ENCODE measurements at regions of chr11 and their contacts with region 1.

Region 1: GRCh38 chr11:108222686-108223448 is at the start of gene ATM:
- DNase-seq: peak; percentile 97 to 100 (median 98)
- ATAC-seq: peak; percentile 73
- H3K4me3 ChIP-seq: peak within 1 kb of the TSS; percentile 75
- H3K4me3 Mint-ChIP-seq: no peak within 1 kb of the TSS
- H3K27ac ChIP-seq: peak within 1 kb of the TSS; percentile 95 to 99
- H3K27ac Mint-ChIP-seq: no peak within 1 kb of the TSS
- H3K4me1 ChIP-seq: peaks cover 23% of the 10 kb centered on the region
- H3K4me1 Mint-ChIP-seq: peaks cover 50% of the 10 kb centered on the region
- H3K27me3 ChIP-seq: no peaks in the 10 kb centered on the region
- H3K27me3 Mint-ChIP-seq: no peaks in the 10 kb centered on the region
- CTCF ChIP-seq: peak; percentile 82
- total RNA-seq, gene ATM: 307 to 329 TPM

Region 2: DNA sequence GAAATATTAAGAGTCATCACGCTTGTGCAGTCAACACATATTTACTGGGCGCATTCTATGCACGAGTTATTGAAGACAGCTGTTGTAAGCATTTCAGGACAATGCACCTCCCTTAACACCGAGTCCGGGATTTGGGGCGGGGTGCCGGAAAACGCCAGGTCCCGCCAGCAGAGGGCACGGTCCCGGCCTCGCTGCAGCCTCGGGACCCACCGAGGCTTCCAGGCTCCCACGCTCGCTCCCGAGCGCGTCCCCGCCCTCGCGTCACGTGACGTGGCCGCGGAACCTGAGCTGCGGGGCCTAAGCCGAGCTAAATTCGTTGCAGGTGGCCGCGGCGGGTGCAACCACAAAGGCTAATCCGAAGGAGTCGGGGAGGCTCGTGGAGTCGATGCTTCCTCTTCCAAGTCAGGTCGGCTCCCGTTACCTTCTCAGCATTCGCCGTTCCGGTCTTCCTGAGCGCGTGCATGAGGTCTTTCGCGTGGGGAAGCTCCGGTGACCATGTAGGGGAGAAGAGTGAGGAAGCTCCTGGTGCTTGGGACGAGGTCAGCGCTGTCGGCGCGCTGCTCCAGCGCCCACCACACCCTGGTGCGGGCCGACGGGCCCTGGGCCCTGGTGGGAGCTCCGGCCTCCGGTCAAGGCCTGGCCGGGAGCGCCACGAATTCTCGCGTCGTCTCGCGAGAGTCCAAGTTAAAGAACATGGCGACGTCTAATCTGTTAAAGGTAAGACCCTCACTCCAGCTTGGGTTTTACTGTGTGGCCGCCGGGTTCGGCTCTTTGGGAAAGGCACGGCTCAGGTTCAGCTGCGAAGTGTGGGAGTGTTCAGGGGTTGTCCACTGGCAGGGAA is 214.0 kb before region 1 on chr11 and contains the start of gene CUL5:
- CTCF ChIA-PET with region 1: interaction called, 3 read pairs
- POLR2A ChIA-PET with region 1: interaction called, 11 read pairs
- intact Hi-C with region 1: no loop called
- DNase-seq: peak; percentile 76 to 95 (median 86)
- ATAC-seq: peak; percentile 86
- H3K4me3 ChIP-seq: peak within 1 kb of the TSS; percentile 89
- H3K4me3 Mint-ChIP-seq: peak within 1 kb of the TSS; percentile 99
- H3K27ac ChIP-seq: peak within 1 kb of the TSS; percentile 91 to 94
- H3K27ac Mint-ChIP-seq: peak within 1 kb of the TSS; percentile 93
- H3K4me1 ChIP-seq: peaks cover 15% of the 10 kb centered on the region
- H3K4me1 Mint-ChIP-seq: peaks cover 16% of the 10 kb centered on the region
- H3K27me3 ChIP-seq: no peaks in the 10 kb centered on the region
- H3K27me3 Mint-ChIP-seq: no peaks in the 10 kb centered on the region
- CTCF ChIP-seq: peak; percentile 86
- total RNA-seq, gene CUL5: 65.5 to 67.6 TPM

Region 3: GRCh38 chr11:108135845-108136544 is 86.9 kb before region 1 on chr11:
- CTCF ChIA-PET with region 1: no interaction called
- POLR2A ChIA-PET with region 1: no interaction called
- intact Hi-C with region 1: no loop called
- DNase-seq: peak in 5 of 14 experiments; percentile 7 to 53 (median 35)
- ATAC-seq: peak; percentile 66
- H3K4me3 ChIP-seq: no peak overlapping the region
- H3K4me3 Mint-ChIP-seq: no peak overlapping the region
- H3K27ac ChIP-seq: no peak overlapping the region
- H3K27ac Mint-ChIP-seq: peak overlapping the region; percentile 40
- H3K4me1 ChIP-seq: no peaks in the 10 kb centered on the region
- H3K4me1 Mint-ChIP-seq: peaks cover 21% of the 10 kb centered on the region
- H3K27me3 ChIP-seq: no peaks in the 10 kb centered on the region
- H3K27me3 Mint-ChIP-seq: no peaks in the 10 kb centered on the region
- CTCF ChIP-seq: peak; percentile 23

Region 4: GRCh38 chr11:108199446-108200321 is 23.2 kb before region 1 on chr11:
- CTCF ChIA-PET with region 1: interaction called, 3 read pairs
- POLR2A ChIA-PET with region 1: interaction called, 6 read pairs
- intact Hi-C with region 1: loop called in 1 of 2 experiments (anchors 2 kb)
- DNase-seq: peak in 6 of 14 experiments; percentile 12 to 75 (median 34)
- ATAC-seq: peak; percentile 76
- H3K4me3 ChIP-seq: no peak overlapping the region
- H3K4me3 Mint-ChIP-seq: no peak overlapping the region
- H3K27ac ChIP-seq: no peak overlapping the region
- H3K27ac Mint-ChIP-seq: peak overlapping the region; percentile 76
- H3K4me1 ChIP-seq: peaks cover 59% of the 10 kb centered on the region
- H3K4me1 Mint-ChIP-seq: peaks cover 90% of the 10 kb centered on the region
- H3K27me3 ChIP-seq: no peaks in the 10 kb centered on the region
- H3K27me3 Mint-ChIP-seq: no peaks in the 10 kb centered on the region
- CTCF ChIP-seq: no peak

Region 5: DNA sequence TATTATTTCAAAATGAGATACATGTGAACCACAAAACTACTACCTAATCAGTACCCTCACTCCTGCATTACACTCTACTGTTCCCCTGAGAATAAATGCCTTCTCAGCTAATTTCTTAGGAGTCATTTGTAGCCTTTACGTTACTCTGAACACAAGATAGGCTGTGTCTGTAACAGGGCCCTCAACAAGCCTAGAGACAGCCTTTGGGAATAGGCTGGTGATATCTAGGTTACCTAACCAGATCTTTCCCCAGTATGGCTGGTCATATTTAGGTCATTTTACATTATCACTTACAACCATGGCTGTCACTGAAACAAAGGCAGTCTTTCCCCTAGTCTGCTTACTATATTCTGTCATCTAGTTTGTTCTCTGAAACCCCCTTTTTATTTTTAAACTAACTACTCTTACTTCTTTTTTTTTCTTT is 14.2 kb after region 1 on chr11:
- CTCF ChIA-PET with region 1: interaction called, 65 read pairs
- POLR2A ChIA-PET with region 1: interaction called, 773 read pairs
- intact Hi-C with region 1: loop called (anchors 1 to 2 kb)
- DNase-seq: peak in 3 of 14 experiments; percentile 63 to 70 (median 64)
- ATAC-seq: peak; percentile 35
- H3K4me3 ChIP-seq: peak overlapping the region; percentile 14
- H3K4me3 Mint-ChIP-seq: peak overlapping the region; percentile 72
- H3K27ac ChIP-seq: peak overlapping the region; percentile 64 to 95
- H3K27ac Mint-ChIP-seq: no peak overlapping the region
- H3K4me1 ChIP-seq: peaks cover 68% of the 10 kb centered on the region
- H3K4me1 Mint-ChIP-seq: peaks cover 81% of the 10 kb centered on the region
- H3K27me3 ChIP-seq: no peaks in the 10 kb centered on the region
- H3K27me3 Mint-ChIP-seq: no peaks in the 10 kb centered on the region
- CTCF ChIP-seq: no peak

Region 6: DNA sequence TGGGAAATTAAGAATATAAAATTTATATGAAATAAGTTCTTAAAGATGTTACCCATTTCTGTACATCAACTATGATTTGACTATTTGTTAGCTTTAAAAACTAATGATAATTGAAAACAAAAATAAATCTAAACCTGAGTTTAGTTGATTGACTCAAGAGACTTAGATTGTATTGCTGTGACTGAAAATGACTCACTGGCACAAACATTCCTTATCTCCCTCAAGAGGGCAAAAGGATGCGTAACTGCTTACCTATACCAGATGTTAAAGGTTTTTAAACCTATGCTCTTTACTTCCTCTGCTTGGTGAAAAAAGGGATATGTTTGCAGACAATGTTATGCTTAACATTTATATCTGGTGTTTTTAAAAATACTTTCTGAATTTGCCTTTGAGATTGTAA is 30.3 kb after region 1 on chr11:
- CTCF ChIA-PET with region 1: interaction called, 23 read pairs
- POLR2A ChIA-PET with region 1: interaction called, 93 read pairs
- intact Hi-C with region 1: loop called (anchors 2 to 5 kb)
- DNase-seq: peak in 1 of 14 experiments; percentile 28
- ATAC-seq: peak; percentile 59
- H3K4me3 ChIP-seq: no peak overlapping the region
- H3K4me3 Mint-ChIP-seq: no peak overlapping the region
- H3K27ac ChIP-seq: no peak overlapping the region
- H3K27ac Mint-ChIP-seq: peak overlapping the region; percentile 79
- H3K4me1 ChIP-seq: peaks cover 5% of the 10 kb centered on the region
- H3K4me1 Mint-ChIP-seq: peaks cover 74% of the 10 kb centered on the region
- H3K27me3 ChIP-seq: no peaks in the 10 kb centered on the region
- H3K27me3 Mint-ChIP-seq: no peaks in the 10 kb centered on the region
- CTCF ChIP-seq: no peak

Region 7: GRCh38 chr11:108289699-108290098 is 66.8 kb after region 1 on chr11:
- CTCF ChIA-PET with region 1: interaction called, 11 read pairs
- POLR2A ChIA-PET with region 1: interaction called, 11 read pairs
- intact Hi-C with region 1: loop called in 1 of 2 experiments (anchors 5 kb)
- DNase-seq: no peak
- ATAC-seq: no peak
- H3K4me3 ChIP-seq: no peak overlapping the region
- H3K4me3 Mint-ChIP-seq: no peak overlapping the region
- H3K27ac ChIP-seq: no peak overlapping the region
- H3K27ac Mint-ChIP-seq: peak overlapping the region; percentile 42
- H3K4me1 ChIP-seq: no peaks in the 10 kb centered on the region
- H3K4me1 Mint-ChIP-seq: peaks cover 31% of the 10 kb centered on the region
- H3K27me3 ChIP-seq: no peaks in the 10 kb centered on the region
- H3K27me3 Mint-ChIP-seq: no peaks in the 10 kb centered on the region
- CTCF ChIP-seq: no peak

Region 8: GRCh38 chr11:108593214-108593922 is 370.5 kb after region 1 on chr11 and contains the start of gene EXPH5:
- CTCF ChIA-PET with region 1: no interaction called
- POLR2A ChIA-PET with region 1: interaction called, 4 read pairs
- intact Hi-C with region 1: loop called in 1 of 2 experiments (anchors 5 kb)
- DNase-seq: peak; percentile 66 to 96 (median 87)
- ATAC-seq: peak; percentile 92
- H3K4me3 ChIP-seq: peak within 1 kb of the TSS; percentile 84
- H3K4me3 Mint-ChIP-seq: peak within 1 kb of the TSS; percentile 99
- H3K27ac ChIP-seq: peak within 1 kb of the TSS in 1 of 2 donors; percentile 37
- H3K27ac Mint-ChIP-seq: peak within 1 kb of the TSS; percentile 83
- H3K4me1 ChIP-seq: peaks cover 15% of the 10 kb centered on the region
- H3K4me1 Mint-ChIP-seq: peaks cover 24% of the 10 kb centered on the region
- H3K27me3 ChIP-seq: no peaks in the 10 kb centered on the region
- H3K27me3 Mint-ChIP-seq: peaks cover 9% of the 10 kb centered on the region
- CTCF ChIP-seq: no peak
- total RNA-seq, gene EXPH5: 2.0 to 3.7 TPM

Region 9: GRCh38 chr11:109422870-109423465 is 1200.1 kb after region 1 on chr11:
- CTCF ChIA-PET with region 1: no interaction called
- POLR2A ChIA-PET with region 1: no interaction called
- intact Hi-C with region 1: no loop called
- DNase-seq: no peak
- ATAC-seq: no peak
- H3K4me3 ChIP-seq: no peak overlapping the region
- H3K4me3 Mint-ChIP-seq: no peak overlapping the region
- H3K27ac ChIP-seq: no peak overlapping the region
- H3K27ac Mint-ChIP-seq: no peak overlapping the region
- H3K4me1 ChIP-seq: no peaks in the 10 kb centered on the region
- H3K4me1 Mint-ChIP-seq: no peaks in the 10 kb centered on the region
- H3K27me3 ChIP-seq: peaks cover 24 to 40% of the 10 kb centered on the region in 2 experiments
- H3K27me3 Mint-ChIP-seq: peaks cover 49% of the 10 kb centered on the region
- CTCF ChIP-seq: no peak